K562 (cell line): ENCODE measurements at regions of chr3 and their contacts with region 1.

Region 1: DNA sequence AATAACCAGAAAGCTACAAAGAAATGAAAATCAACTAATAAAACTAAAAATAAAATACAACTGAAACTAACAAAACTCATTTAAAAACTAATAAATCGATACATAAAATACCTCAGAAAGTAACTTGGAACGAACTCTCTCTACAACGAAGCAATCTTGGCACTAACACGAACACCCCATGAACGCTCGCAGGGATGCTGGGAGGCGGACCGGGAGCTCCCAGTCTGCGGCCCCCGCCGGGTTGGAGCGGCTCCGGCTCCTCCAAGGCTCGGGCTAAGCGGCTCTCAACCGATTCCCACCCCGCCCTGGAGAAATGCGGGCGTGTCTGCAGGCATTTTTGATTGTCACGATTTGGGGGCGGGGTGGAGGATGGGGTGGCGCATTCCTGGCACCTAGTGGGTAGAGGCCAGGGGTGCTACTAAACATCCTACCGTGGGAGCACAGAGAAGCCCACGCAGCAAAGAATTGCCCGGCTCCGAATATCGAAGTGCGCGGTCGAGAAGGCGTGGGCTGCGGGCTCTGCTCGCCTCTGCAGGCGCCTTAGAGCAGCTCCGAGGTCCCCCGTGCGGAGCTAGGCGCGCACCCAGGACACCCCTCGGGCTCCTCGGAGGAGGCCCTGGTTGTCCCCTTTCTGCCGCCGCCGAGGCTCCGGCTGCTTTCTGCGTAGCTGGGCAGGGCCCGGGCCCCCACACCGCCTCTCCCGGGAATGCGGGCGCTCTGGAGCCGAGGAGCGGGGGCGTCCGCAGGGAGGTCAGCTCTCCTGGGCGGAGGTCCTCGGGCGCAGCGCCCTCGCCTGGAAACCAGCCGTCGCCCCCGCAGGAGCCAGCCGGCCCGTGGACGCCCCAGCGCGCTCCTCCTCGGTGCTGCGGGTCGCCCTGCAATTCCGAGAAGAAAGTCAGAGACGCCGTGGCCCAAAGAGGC is 16.4 kb upstream of the LAMP3 start:
- DNase-seq: peak; percentile 65 to 69 (median 68)
- ATAC-seq: peak; percentile 92
- H3K4me3 ChIP-seq: peak overlapping the region; percentile 50
- H3K27ac ChIP-seq: no peak overlapping the region
- H3K4me1 ChIP-seq: peaks cover 0 to 25% of the 10 kb centered on the region in 2 experiments; a peak in 2 of 5 replicates
- H3K27me3 ChIP-seq: peaks cover 0 to 29% of the 10 kb centered on the region in 2 experiments; a peak in 3 of 5 replicates
- CTCF ChIP-seq: peak; percentile 55 to 90 (median 62); a peak in 5 of 6 replicates
- EP300 ChIP-seq: no peak
- POLR2A ChIP-seq: no peak
- RAD21 ChIP-seq: peak; percentile 47 to 58

Region 2: GRCh38 chr3:183377307-183377959 is 198.5 kb after region 1 on chr3:
- CTCF ChIA-PET with region 1: interaction called, 61 read pairs
- POLR2A ChIA-PET with region 1: interaction called, 8 read pairs
- in situ Hi-C with region 1: no loop called
- intact Hi-C with region 1: loop called (anchors 1 kb)
- DNase-seq: no peak
- ATAC-seq: no peak
- H3K4me3 ChIP-seq: no peak overlapping the region
- H3K27ac ChIP-seq: no peak overlapping the region
- H3K4me1 ChIP-seq: peaks cover 4 to 14% of the 10 kb centered on the region in 2 experiments
- H3K27me3 ChIP-seq: no peaks in the 10 kb centered on the region
- CTCF ChIP-seq: no peak
- EP300 ChIP-seq: no peak
- POLR2A ChIP-seq: no peak
- RAD21 ChIP-seq: no peak

Region 3: DNA sequence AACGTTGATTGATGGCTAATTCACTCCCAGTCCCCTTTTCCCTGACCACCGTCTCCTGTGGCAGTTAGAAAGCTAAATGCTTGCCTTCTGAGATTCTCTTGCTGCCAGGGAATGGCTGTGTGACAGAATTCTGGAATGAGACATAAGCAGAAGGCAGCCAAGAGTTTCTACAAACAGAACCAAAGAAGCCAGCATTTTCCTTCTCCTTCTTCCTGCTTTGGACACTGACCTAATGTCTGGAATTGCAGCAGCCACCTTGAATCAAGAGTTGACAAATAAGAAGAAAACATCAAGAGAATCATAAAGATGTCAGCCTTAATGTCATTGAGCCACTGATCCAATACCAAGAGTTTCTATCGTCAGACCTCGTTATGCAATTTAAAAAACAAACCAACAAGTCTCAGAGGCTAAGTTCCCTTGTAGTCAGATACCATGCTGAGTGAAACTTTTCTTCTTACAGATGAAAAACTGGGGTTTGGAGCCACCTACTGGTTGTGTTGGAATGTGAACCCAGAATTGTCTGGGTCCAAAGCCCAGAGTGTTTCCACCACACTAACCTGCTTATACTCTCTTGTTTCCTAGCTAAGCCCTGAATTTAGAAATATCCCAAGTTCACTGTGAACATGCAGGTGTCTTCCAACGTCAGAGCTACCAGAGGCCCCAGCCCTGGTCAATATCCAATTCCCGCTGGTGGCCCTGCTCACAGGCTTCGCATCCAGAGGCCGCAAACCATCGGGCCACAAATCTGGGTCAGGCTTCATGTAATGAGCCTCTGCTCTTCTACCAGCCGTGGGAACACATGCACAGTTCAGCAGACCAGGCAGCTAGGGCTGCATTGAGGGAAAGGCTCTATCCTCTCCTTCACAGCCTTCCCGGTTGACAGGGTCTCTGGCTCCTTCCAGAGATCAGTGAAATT is 207.1 kb after region 1 on chr3:
- CTCF ChIA-PET with region 1: interaction called, 61 read pairs
- POLR2A ChIA-PET with region 1: interaction called, 8 read pairs
- in situ Hi-C with region 1: loop called (anchors 5 kb)
- intact Hi-C with region 1: loop called (anchors 1 kb)
- DNase-seq: peak; percentile 59 to 79 (median 60)
- ATAC-seq: peak; percentile 89
- H3K4me3 ChIP-seq: no peak overlapping the region
- H3K27ac ChIP-seq: no peak overlapping the region
- H3K4me1 ChIP-seq: peaks cover 0 to 3% of the 10 kb centered on the region in 2 experiments; a peak in 3 of 5 replicates
- H3K27me3 ChIP-seq: no peaks in the 10 kb centered on the region
- CTCF ChIP-seq: peak; percentile 75 to 85 (median 75)
- EP300 ChIP-seq: no peak
- POLR2A ChIP-seq: no peak
- RAD21 ChIP-seq: peak; percentile 88 to 92

Region 4: DNA sequence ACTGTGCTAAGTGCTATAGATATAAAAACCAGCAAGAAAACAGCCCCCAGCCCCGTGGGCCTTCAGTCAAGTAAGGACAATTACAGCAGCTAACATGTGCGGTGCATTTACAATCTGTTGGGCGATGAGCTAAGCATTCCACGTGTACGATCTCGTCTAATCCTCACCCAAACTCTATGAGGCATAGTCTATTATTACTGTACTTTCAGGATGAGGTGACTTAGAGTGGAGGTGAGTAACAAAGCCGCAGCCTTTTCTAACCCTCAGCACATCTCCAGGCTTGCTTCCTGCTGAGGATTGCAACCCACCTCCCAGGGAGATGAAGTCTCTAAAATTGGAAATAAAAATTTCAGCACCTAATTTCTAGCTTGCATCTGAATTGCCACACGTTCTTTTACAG is 302.7 kb after region 1 on chr3:
- CTCF ChIA-PET with region 1: no interaction called
- POLR2A ChIA-PET with region 1: no interaction called
- in situ Hi-C with region 1: no loop called
- intact Hi-C with region 1: loop called (anchors 5 kb)
- DNase-seq: no peak
- ATAC-seq: no peak
- H3K4me3 ChIP-seq: no peak overlapping the region
- H3K27ac ChIP-seq: no peak overlapping the region
- H3K4me1 ChIP-seq: peaks cover 11 to 17% of the 10 kb centered on the region in 2 experiments
- H3K27me3 ChIP-seq: no peaks in the 10 kb centered on the region
- CTCF ChIP-seq: no peak
- EP300 ChIP-seq: no peak
- POLR2A ChIP-seq: no peak
- RAD21 ChIP-seq: no peak